Motor neuron (in vitro differentiated cells): ENCODE measurements at regions of chr10 and their contacts with region 1.

Region 1: GRCh38 chr10:75099952-75100763 is 11.3 kb upstream of the SAMD8 start:
- ATAC-seq: peak; percentile 75 to 95 (median 91)
- H3K4me3 ChIP-seq: no peak overlapping the region
- H3K27ac ChIP-seq: no peak overlapping the region
- H3K4me1 ChIP-seq: peaks cover 6 to 8% of the 10 kb centered on the region in 2 donors

Region 2: DNA sequence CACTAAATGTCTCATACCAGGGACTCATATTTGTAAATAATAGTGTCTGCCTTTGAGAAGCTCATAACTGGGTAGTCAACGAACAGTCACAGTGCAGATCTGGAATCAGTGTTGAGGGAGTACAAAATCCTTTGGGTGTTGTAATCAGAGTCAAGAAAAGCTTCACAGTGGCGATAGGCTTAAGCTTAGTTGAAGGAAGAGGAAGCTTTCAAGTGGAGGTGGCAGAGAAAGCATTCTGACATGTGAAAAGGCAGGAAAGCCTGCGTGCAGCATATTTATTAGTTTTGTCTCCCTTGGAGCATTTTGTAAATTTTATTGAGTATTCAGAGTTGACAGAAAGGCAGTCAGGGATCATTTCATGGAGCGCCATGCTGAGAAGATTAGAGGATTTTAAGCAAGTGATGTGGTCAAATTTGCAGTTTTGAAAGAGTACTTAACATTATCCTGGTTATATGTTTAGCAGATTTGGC is 844.2 kb before region 1 on chr10:
- in situ Hi-C with region 1: loop called in 5 of 9 experiments (anchors 10 to 25 kb)
- ATAC-seq: no peak
- H3K4me3 ChIP-seq: no peak overlapping the region
- H3K27ac ChIP-seq: no peak overlapping the region
- H3K4me1 ChIP-seq: no peaks in the 10 kb centered on the region

Region 3: DNA sequence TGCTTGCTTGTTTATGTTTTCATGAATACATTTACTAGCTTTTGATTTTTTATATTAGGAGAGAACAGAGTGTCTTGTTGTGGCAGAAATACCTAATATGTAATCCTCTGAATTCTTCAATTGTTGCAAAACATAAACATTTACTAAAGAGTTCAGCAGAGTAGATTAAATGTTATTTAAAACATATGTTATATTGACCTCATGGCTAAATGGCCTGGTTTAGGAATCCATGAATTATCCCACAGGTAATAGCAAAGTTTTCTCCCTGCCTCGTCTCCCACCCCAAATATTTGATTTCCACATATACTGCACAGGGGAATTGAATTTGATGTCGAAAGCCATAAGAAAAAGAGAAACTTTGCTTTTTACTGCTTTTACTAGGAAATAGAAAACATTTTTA is 837.3 kb before region 1 on chr10:
- in situ Hi-C with region 1: loop called in 5 of 9 experiments (anchors 10 to 25 kb)
- ATAC-seq: no peak
- H3K4me3 ChIP-seq: no peak overlapping the region
- H3K27ac ChIP-seq: no peak overlapping the region
- H3K4me1 ChIP-seq: no peaks in the 10 kb centered on the region

Region 4: GRCh38 chr10:75029857-75030256 is 70.3 kb before region 1 on chr10:
- in situ Hi-C with region 1: loop called in 1 of 9 experiments (anchors 10 kb)
- ATAC-seq: peak in 2 of 8 experiments; percentile 17 to 64
- H3K4me3 ChIP-seq: no peak overlapping the region
- H3K27ac ChIP-seq: no peak overlapping the region
- H3K4me1 ChIP-seq: no peaks in the 10 kb centered on the region

Region 5: DNA sequence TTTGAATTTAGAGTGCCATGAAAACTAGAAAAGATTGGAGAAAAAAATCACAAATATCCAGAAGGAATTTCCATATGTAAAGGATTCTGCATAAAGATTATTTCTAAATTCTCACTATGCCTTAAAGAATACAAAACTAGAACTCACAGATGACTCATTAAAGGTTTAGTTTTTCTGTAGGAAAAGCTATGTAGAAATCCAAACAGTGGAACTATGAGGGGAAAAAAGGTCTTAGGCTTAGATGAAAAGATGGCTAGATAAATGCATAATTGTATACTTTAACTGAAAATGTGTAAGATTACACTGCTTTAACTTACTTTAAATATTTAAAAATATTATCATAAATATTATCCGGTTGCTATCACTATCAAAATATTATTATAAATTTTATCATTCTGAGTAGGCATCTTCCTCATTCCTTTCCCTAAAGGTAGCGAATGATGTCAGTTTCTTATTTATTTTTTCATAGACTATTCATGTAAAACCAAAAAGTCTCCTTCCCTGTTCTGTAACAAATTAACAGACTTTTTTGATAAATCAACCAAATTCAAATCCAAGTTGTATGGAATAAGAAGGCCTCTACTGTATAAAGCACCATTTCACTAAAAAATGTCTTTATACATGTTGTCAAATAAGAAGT is 204.7 kb after region 1 on chr10:
- in situ Hi-C with region 1: no loop called
- ATAC-seq: no peak
- H3K4me3 ChIP-seq: no peak overlapping the region
- H3K27ac ChIP-seq: no peak overlapping the region
- H3K4me1 ChIP-seq: no peaks in the 10 kb centered on the region

Region 6: GRCh38 chr10:75508239-75508813 is 408.2 kb after region 1 on chr10:
- in situ Hi-C with region 1: no loop called
- ATAC-seq: peak in 5 of 8 experiments; percentile 35 to 75 (median 64)
- H3K4me3 ChIP-seq: no peak overlapping the region
- H3K27ac ChIP-seq: no peak overlapping the region
- H3K4me1 ChIP-seq: peaks cover 39 to 45% of the 10 kb centered on the region in 2 donors